ENCODE measurements at regions of chr2 and their contacts with region 1.

Region 1: GRCh38 chr2:223970343-223971128 is 13.3 kb downstream of the MRPL44 start:
- DNase-seq: peak; percentile 50
- H3K4me3 ChIP-seq: no peak overlapping the region
- H3K27ac ChIP-seq: no peak overlapping the region
- H3K4me1 ChIP-seq: no peaks in the 10 kb centered on the region
- H3K27me3 ChIP-seq: no peaks in the 10 kb centered on the region
- CTCF ChIP-seq: peak; percentile 88 to 96

Region 2: GRCh38 chr2:222976521-222977076 is 993.9 kb before region 1 on chr2:
- CTCF ChIA-PET with region 1: no interaction called
- dilution Hi-C with region 1: no loop called
- in situ Hi-C with region 1: no loop called
- intact Hi-C with region 1: loop called (anchors 5 kb)
- DNase-seq: no peak
- H3K4me3 ChIP-seq: no peak overlapping the region
- H3K27ac ChIP-seq: no peak overlapping the region
- H3K4me1 ChIP-seq: peaks cover 15% of the 10 kb centered on the region
- H3K27me3 ChIP-seq: no peaks in the 10 kb centered on the region
- CTCF ChIP-seq: no peak

Region 3: DNA sequence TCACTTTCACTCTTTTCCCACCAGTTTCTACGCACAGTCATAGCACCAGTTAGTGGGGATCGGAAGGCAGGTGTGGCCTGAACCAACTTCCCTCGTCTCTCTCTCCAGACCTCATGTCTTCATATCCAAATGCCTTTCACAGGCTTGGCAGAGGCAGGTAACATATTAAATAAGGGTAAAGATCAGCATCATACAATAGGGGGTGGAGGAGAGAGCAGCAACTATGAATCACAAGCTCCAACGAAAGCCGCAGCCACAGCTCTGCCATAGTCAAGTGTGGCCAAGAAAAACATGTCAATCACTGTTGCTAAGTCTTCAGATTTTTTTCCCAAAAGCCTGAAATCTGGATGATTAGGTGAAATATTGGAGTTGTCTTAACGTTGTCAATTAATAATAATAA is 173.5 kb before region 1 on chr2:
- CTCF ChIA-PET with region 1: no interaction called
- dilution Hi-C with region 1: no loop called
- in situ Hi-C with region 1: no loop called
- intact Hi-C with region 1: no loop called
- DNase-seq: peak; percentile 99
- H3K4me3 ChIP-seq: no peak overlapping the region
- H3K27ac ChIP-seq: peak overlapping the region; percentile 95
- H3K4me1 ChIP-seq: peaks cover 44% of the 10 kb centered on the region
- H3K27me3 ChIP-seq: no peaks in the 10 kb centered on the region
- CTCF ChIP-seq: peak in 1 of 2 donors; percentile 3

Region 4: DNA sequence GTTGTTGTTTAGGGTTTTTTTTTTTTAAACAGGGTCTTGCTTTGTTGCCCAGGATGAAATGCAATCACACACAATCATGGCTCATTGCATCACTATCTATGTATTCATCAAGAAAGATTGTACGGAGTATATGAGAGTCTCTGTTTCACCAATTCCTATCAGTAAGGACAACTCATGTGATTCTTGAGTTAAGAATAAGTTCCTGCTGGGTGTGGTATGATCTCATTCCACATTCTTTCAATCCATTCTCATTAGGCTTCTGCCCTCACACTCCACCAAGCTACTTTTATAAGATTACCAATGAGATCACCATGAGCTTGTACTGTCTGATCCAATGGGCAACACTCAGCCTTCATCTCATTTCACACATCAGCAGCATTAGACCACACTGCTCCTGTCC is 124.0 kb before region 1 on chr2:
- CTCF ChIA-PET with region 1: no interaction called
- dilution Hi-C with region 1: no loop called
- in situ Hi-C with region 1: no loop called
- intact Hi-C with region 1: no loop called
- DNase-seq: peak; percentile 90
- H3K4me3 ChIP-seq: no peak overlapping the region
- H3K27ac ChIP-seq: peak overlapping the region; percentile 55
- H3K4me1 ChIP-seq: peaks cover 9% of the 10 kb centered on the region
- H3K27me3 ChIP-seq: no peaks in the 10 kb centered on the region
- CTCF ChIP-seq: no peak

Region 5: DNA sequence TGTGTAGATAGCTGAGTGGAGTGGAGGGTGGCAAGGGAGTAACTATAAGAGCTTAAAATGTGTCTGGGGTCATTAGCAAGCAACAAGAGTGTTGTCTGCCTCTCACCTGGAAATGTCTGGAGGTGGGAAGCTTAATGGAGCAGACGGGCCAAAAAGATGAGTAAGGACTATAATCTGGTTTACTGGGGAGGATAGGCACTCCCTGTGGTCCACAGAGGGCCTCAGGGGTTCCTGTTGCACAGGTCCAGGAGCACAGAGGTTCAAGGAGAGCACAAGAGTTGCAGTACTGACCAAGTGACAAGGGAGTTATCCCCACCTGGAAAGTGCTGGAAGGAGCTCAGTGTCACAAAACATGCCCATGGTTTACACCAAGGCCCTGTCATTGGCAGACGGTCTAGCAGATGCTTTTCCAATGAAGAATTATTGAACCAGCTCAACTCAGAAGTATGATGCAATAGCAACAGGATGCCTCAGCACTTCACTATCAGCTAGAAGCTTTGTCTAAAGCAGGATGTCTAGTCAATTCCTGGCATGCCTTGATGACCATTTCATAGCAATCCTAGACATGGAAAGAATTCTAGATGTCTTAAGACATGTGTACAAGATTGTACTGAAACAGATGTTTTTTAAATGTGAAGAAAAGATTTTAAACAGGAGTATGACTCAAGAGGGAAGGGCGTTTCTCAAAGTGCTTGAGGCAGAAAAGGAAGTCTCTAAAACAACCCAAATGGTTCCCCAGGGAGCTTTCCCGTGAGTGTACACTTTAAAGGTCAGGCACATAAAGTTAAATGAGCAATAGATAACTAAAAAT is 131.5 kb after region 1 on chr2:
- CTCF ChIA-PET with region 1: no interaction called
- dilution Hi-C with region 1: no loop called
- in situ Hi-C with region 1: no loop called
- intact Hi-C with region 1: no loop called
- DNase-seq: peak; percentile 94
- H3K4me3 ChIP-seq: no peak overlapping the region
- H3K27ac ChIP-seq: peak overlapping the region; percentile 54
- H3K4me1 ChIP-seq: peaks cover 45% of the 10 kb centered on the region
- H3K27me3 ChIP-seq: no peaks in the 10 kb centered on the region
- CTCF ChIP-seq: no peak

Region 6: DNA sequence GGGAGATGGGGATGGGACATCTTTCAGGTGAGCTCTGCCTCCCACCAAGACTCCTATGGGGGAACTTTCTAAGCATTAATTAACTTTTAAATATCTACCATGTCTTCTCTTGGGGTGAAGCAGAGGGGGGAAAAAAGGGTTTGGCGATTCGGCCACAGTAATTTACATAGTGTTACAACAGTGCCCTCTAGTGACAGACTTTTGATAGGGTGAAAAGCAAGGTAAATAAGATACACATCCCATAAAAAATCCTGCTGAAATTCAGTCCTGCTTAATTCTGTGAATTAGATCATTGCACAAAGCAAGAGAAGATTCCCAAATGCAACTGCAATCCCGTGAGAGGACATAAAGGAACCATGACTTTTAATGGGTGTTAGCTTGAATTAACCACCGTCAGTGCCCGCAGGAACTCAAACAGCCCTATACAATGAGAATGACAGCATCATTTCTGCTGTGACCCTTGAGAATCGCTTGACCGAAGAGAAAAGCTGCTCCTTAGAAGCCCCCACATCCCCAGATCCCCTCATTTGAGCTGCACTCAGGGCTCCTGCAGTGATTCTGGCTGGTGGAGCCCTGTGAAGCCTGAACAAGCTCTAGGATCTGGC is 398.6 kb after region 1 on chr2:
- CTCF ChIA-PET with region 1: no interaction called
- dilution Hi-C with region 1: no loop called
- in situ Hi-C with region 1: no loop called
- intact Hi-C with region 1: loop called (anchors 5 kb)
- DNase-seq: peak; percentile 20
- H3K4me3 ChIP-seq: no peak overlapping the region
- H3K27ac ChIP-seq: no peak overlapping the region
- H3K4me1 ChIP-seq: no peaks in the 10 kb centered on the region
- H3K27me3 ChIP-seq: no peaks in the 10 kb centered on the region
- CTCF ChIP-seq: peak; percentile 64 to 70

Region 7: DNA sequence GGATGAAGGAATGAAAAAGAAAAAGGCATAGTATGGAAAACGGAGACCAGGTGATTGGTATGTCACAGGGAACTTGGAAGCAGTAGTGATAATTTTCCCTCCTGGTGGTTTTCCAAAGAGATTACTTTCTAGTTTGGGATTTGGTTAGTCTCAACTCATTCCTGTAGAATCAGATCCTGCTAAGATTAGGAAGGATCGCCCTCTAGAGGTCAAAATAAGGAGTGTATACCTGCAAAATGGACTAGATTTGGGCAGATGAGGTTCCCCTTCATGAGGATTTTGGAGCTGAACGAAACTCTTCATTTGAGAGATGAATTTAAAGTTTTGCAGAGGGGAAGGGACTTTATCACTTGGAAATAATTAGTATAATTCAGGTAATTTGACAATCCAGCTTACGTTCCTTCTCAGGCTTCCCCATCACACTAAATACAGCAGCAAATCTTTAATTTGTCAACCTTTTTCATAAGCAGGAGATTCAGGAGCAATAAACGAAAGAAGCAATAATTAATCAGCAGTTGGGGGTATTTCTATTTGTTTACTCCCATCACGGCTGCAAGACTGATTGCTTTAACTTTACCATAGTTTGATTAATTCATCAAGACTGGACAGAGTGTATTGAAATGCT is 680.4 kb after region 1 on chr2:
- CTCF ChIA-PET with region 1: interaction called, 3 read pairs
- dilution Hi-C with region 1: no loop called
- in situ Hi-C with region 1: no loop called
- intact Hi-C with region 1: loop called (anchors 10 kb)
- DNase-seq: peak; percentile 31
- H3K4me3 ChIP-seq: no peak overlapping the region
- H3K27ac ChIP-seq: no peak overlapping the region
- H3K4me1 ChIP-seq: no peaks in the 10 kb centered on the region
- H3K27me3 ChIP-seq: no peaks in the 10 kb centered on the region
- CTCF ChIP-seq: peak; percentile 66 to 81